SK-N-SH (cell line): ENCODE measurements at regions of chr12 and their contacts with region 1.

Region 1: DNA sequence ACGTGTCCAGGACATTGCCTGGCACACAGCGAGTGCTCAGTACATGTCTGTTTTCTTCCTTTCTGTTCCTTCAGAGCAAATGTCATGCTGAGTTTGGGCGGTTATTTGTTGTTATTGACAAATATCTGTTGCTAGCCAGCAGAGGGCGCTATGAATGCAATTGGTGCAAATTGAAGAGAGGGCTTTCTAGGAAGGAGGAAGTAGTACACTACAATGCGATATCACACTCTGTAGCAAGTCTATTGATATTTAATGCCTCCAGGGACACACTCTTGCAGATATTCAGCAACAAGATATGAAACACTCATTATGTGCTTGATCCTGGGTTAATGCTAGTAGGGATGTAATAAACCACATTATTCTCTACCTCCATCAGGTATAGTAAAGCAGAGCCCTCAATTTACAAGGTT is 267.3 kb upstream of the SRRM4 start:
- DNase-seq: peak; percentile 66
- H3K4me3 ChIP-seq: no peak overlapping the region; a peak in 1 of 4 replicates
- H3K27ac ChIP-seq: no peak overlapping the region
- H3K4me1 ChIP-seq: no peaks in the 10 kb centered on the region
- H3K27me3 ChIP-seq: no peaks in the 10 kb centered on the region
- CTCF ChIP-seq: peak; percentile 43
- EP300 ChIP-seq: no peak
- RAD21 ChIP-seq: peak; percentile 81

Region 2: GRCh38 chr12:118727196-118727978 is 13.3 kb after region 1 on chr12:
- CTCF ChIA-PET with region 1: interaction called, 34 read pairs
- POLR2A ChIA-PET with region 1: no interaction called
- DNase-seq: peak; percentile 35
- H3K4me3 ChIP-seq: no peak overlapping the region
- H3K27ac ChIP-seq: peak overlapping the region in 1 of 2 experiments; percentile 81; a peak in 2 of 4 replicates
- H3K4me1 ChIP-seq: peaks cover 0 to 13% of the 10 kb centered on the region in 2 experiments; a peak in 2 of 4 replicates
- H3K27me3 ChIP-seq: no peaks in the 10 kb centered on the region
- CTCF ChIP-seq: no peak
- EP300 ChIP-seq: no peak
- RAD21 ChIP-seq: no peak

Region 3: GRCh38 chr12:118840399-118840798 is 126.3 kb after region 1 on chr12:
- CTCF ChIA-PET with region 1: interaction called, 29 read pairs
- POLR2A ChIA-PET with region 1: no interaction called
- DNase-seq: peak; percentile 30
- H3K4me3 ChIP-seq: no peak overlapping the region
- H3K27ac ChIP-seq: no peak overlapping the region
- H3K4me1 ChIP-seq: no peaks in the 10 kb centered on the region; a peak in 1 of 4 replicates
- H3K27me3 ChIP-seq: no peaks in the 10 kb centered on the region
- CTCF ChIP-seq: no peak
- EP300 ChIP-seq: no peak
- RAD21 ChIP-seq: peak; percentile 66